ENCODE measurements at regions of chrX and their contacts with region 1.

Region 1: DNA sequence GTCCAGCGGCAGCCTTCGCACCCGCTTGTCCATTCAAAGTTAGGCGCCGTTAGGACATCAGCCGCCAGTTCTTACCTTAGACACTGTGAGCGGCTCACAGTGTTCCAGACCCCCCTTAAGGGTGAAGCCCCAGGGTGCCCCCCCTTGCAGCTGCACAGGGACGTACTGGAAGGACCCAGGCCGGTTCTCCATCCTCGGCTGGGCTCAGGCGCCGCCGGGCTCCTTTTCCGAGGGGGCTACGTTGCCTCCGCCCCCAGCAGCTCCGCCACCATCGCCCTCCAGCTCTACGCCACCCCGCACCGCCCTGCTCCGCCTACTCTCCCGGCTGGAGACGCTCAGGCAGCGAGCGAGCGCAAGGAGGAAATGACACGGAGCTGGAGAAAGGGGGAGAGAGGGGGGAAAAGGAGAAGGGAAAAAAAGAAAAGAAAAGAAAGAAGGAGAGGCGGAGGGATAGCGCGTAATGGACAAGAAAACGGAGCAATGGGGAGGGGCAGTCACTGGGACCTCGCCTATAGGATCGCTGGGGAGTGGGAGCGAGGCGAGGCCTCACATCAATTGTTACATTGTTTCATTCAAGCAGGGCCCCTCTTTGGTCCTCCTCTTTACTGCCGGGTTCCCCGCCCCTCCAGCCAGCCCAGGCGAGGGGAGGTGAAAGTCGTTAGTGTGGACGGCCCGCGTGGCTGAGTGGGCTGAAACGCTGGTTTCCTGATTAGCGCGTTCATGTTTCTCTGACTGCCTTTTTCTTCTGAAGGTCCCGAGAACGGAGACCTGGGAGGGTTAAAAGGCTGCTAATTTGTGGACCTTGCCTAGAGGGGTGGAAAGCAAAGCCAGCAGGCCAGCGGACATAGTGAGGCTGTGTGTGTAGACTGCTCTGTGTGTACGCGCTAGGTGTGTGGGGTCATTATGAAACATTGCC is at the start of gene SHROOM4:
- DNase-seq: peak; percentile 57 to 70 (median 60)
- ATAC-seq: peak; percentile 84 to 95 (median 90)
- H3K4me3 ChIP-seq: peak within 1 kb of the TSS; percentile 29 to 75 (median 60)
- H3K27ac ChIP-seq: peak within 1 kb of the TSS in 11 of 12 donors; percentile 64 to 81 (median 77)
- H3K4me1 ChIP-seq: no peaks in the 10 kb centered on the region
- H3K27me3 ChIP-seq: peaks cover 0 to 24% (median 0%) of the 10 kb centered on the region in 9 donors
- CTCF ChIP-seq: no peak
- POLR2A ChIP-seq: no peak
- total RNA-seq, gene SHROOM4: 8.1 to 25.5 (median 11.2) TPM

Region 2: DNA sequence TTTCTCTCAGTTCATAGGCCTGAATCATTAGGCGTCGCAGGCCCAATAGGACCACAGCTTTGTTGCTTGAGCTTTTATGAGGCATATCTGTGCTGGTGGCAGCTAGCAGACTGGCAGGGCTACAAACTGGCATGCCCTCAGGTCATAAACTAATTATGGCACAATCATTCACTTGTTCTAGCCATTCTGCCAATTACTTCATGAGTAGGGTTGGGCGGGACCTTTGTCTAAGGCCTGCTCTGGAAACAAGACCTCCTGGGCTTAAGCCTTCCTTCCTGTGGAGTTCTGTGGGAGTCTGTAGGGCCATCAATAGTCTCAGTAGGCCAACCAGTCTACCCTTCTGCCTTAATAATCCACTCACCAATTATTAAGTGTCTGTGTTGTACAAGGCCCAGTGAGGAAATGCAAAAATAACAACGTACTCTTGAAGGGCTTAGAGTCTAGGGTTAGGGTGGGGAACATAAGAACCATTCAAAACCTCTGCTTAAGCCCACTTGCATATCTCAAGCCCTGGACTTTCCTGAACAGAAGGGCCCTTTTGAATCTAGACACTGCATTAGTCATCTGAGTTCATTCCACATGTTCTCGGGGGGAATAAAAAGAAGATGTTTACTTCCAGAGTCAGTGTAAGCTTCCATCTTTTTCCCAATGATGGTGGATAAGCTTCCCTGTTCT is 44.6 kb before region 1 on chrX:
- intact Hi-C with region 1: loop called in 2 of 10 experiments (anchors 2 to 10 kb)
- DNase-seq: peak in 3 of 5 donors; percentile 17 to 29 (median 22)
- ATAC-seq: peak; percentile 67 to 88 (median 82)
- H3K4me3 ChIP-seq: no peak overlapping the region
- H3K27ac ChIP-seq: peak overlapping the region in 3 of 12 donors; percentile 5 to 29 (median 21)
- H3K4me1 ChIP-seq: peaks cover 0 to 24% (median 3%) of the 10 kb centered on the region in 12 donors
- H3K27me3 ChIP-seq: peaks cover 0 to 9% (median 0%) of the 10 kb centered on the region in 9 donors
- CTCF ChIP-seq: no peak
- POLR2A ChIP-seq: no peak

Region 3: DNA sequence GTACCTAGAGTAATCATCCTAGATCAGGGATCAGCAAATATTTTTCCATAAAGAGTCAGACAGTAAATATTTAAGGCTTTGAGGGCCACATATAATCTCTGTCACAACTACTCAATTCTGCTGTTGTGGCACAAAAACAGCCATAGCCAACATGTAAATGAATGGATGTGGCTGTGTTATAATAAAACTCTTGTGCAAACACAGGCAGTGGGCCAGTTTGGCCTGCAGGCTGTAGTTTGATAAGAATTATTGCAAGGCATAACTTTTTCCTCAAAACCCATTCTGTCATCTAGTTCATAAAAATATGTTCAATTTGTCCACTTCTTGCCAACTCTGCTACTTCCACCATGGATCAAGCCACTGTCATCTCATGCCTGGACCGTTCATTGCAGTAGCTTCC is 39.3 kb after region 1 on chrX:
- intact Hi-C with region 1: no loop called
- DNase-seq: no peak
- ATAC-seq: no peak
- H3K4me3 ChIP-seq: no peak overlapping the region
- H3K27ac ChIP-seq: no peak overlapping the region
- H3K4me1 ChIP-seq: no peaks in the 10 kb centered on the region
- H3K27me3 ChIP-seq: peaks cover 0 to 4% (median 0%) of the 10 kb centered on the region in 9 donors
- CTCF ChIP-seq: no peak
- POLR2A ChIP-seq: no peak

Region 4: DNA sequence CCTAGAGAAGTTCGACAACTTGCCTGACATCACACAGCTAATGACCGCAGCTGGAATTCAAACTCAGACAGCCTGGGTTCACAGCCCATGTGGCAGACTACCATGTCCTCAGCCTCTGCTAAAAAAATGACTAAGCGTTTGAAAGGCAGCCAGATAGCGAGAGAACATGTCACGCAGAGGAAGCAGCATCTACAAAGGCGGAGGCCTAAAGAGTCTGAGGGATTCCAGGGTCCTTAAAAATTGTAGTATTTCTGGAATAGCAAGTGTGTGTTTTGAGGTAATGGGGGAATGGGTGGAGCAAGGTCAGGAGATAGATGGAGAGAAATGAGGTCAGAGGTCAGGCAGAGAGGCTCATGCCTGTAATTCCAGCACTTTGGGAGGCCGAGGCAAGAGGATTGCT is 63.3 kb after region 1 on chrX:
- intact Hi-C with region 1: loop called in 1 of 10 experiments (anchors 10 kb)
- DNase-seq: peak in 1 of 5 donors; percentile 27
- ATAC-seq: peak in 2 of 4 donors; percentile 18 to 77
- H3K4me3 ChIP-seq: no peak overlapping the region
- H3K27ac ChIP-seq: no peak overlapping the region
- H3K4me1 ChIP-seq: no peaks in the 10 kb centered on the region
- H3K27me3 ChIP-seq: peaks cover 0 to 14% (median 0%) of the 10 kb centered on the region in 9 donors
- CTCF ChIP-seq: no peak
- POLR2A ChIP-seq: no peak

Measured in heart left ventricle (tissue), 16 donors.